ENCODE measurements at regions of chr12 and their contacts with region 1.

Region 1: DNA sequence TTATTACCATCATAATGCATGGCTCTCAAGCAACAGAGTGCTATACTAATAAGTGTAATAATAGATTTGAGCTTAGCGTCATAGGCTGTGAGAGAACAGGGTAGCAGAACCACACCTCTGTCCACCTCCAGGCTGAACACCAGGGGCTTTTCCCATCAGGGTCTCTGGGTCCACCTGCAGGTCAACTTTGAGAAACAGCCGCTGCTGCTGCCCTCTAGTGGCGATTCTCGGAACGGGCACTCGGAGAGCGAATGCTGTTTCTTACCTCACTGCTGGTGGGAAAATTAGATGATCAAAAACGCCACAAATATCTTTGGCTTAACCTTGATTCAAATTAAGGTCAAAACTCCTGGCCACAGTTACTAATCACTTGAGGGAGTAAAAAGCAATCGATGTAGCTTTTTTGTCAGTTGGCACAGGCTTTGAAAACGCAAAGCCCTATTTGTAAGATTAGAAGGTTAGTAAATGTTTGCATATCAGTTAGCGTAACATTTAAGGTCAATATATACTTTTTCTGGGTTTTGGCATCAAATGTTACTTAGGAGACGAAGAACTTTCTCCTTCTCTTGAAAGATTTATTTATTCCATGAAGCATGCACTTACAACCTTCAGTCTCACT is 127.9 kb upstream of the TMEM132D start:
- DNase-seq: peak; percentile 45
- H3K4me3 ChIP-seq: no peak overlapping the region
- H3K27ac ChIP-seq: no peak overlapping the region
- H3K4me1 ChIP-seq: no peaks in the 10 kb centered on the region
- H3K27me3 ChIP-seq: no peaks in the 10 kb centered on the region
- CTCF ChIP-seq: peak; percentile 86 to 99 (median 99)

Region 2: DNA sequence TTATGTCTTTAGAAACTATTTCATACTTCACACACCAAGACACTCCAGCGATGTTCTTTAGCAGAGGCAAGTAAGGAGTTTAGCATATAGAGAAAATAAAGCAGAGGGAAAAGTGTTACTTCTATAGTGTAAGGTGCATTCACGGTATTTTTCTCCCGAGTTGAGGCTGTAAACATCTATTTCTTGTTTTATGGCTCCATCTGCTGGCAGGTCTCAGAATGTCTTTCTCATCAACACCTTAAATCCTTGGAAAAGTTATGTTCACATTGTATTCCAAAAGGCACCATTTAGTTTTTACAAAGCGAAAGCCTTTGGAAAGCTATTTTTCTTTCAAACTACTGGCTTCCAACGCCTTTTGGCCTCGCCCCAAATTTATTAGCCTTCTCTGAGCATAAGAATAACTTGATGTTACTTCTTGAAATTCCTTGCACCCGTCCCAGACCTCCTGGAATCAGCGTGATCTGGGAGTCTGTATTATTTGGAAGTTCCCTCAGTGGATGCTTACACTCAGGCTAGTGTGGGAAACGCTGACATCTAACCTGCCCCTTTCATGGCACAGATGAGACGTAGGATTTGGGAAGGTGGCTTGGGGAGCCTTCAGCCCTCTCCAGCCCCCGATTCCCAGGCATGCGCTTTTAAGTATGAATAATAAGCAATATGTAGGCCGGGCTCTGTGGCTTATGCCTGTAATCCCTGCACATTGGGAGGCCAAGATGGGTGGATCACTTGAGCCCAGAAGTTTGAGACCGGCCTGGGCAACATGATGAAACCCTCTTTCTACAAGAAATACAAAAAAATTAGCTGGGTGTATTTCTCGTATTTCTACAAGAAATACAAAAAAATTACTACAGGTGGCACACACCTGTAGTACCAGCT is 304.1 kb after region 1 on chr12:
- dilution Hi-C with region 1: loop called (anchors 25 kb)
- DNase-seq: peak; percentile 23
- H3K4me3 ChIP-seq: no peak overlapping the region
- H3K27ac ChIP-seq: no peak overlapping the region
- H3K4me1 ChIP-seq: peaks cover 15% of the 10 kb centered on the region
- H3K27me3 ChIP-seq: peaks cover 4% of the 10 kb centered on the region
- CTCF ChIP-seq: peak in 2 of 3 experiments; percentile 34 to 39